MCF 10A (cell line): ENCODE measurements at regions of chr15 and their contacts with region 1.

Region 1: GRCh38 chr15:61169904-61170695 is 59.0 kb downstream of the RORA start:
- DNase-seq: no peak
- H3K4me3 Mint-ChIP-seq: no peak overlapping the region
- H3K27ac Mint-ChIP-seq: no peak overlapping the region
- H3K4me1 Mint-ChIP-seq: no peaks in the 10 kb centered on the region
- H3K27me3 Mint-ChIP-seq: no peaks in the 10 kb centered on the region
- CTCF ChIP-seq: no peak

Region 2: GRCh38 chr15:60865507-60865906 is 304.6 kb before region 1 on chr15:
- CTCF ChIA-PET with region 1: no interaction called
- POLR2A ChIA-PET with region 1: no interaction called
- intact Hi-C with region 1: no loop called
- DNase-seq: peak; percentile 90
- H3K4me3 Mint-ChIP-seq: no peak overlapping the region
- H3K27ac Mint-ChIP-seq: no peak overlapping the region
- H3K4me1 Mint-ChIP-seq: peaks cover 8% of the 10 kb centered on the region
- H3K27me3 Mint-ChIP-seq: peaks cover 17% of the 10 kb centered on the region
- CTCF ChIP-seq: no peak

Region 3: GRCh38 chr15:61621146-61621545 is 451.0 kb after region 1 on chr15:
- CTCF ChIA-PET with region 1: interaction called, 80 read pairs
- POLR2A ChIA-PET with region 1: no interaction called
- intact Hi-C with region 1: loop called (anchors 1 kb)
- DNase-seq: peak; percentile 49
- H3K4me3 Mint-ChIP-seq: no peak overlapping the region
- H3K27ac Mint-ChIP-seq: no peak overlapping the region
- H3K4me1 Mint-ChIP-seq: no peaks in the 10 kb centered on the region
- H3K27me3 Mint-ChIP-seq: no peaks in the 10 kb centered on the region
- CTCF ChIP-seq: peak; percentile 53